Activated B cell treated with CpG ODN at 0.5 μM for 24 hours (primary cell): ENCODE measurements at regions of chr15 and their contacts with region 1.

Region 1: DNA sequence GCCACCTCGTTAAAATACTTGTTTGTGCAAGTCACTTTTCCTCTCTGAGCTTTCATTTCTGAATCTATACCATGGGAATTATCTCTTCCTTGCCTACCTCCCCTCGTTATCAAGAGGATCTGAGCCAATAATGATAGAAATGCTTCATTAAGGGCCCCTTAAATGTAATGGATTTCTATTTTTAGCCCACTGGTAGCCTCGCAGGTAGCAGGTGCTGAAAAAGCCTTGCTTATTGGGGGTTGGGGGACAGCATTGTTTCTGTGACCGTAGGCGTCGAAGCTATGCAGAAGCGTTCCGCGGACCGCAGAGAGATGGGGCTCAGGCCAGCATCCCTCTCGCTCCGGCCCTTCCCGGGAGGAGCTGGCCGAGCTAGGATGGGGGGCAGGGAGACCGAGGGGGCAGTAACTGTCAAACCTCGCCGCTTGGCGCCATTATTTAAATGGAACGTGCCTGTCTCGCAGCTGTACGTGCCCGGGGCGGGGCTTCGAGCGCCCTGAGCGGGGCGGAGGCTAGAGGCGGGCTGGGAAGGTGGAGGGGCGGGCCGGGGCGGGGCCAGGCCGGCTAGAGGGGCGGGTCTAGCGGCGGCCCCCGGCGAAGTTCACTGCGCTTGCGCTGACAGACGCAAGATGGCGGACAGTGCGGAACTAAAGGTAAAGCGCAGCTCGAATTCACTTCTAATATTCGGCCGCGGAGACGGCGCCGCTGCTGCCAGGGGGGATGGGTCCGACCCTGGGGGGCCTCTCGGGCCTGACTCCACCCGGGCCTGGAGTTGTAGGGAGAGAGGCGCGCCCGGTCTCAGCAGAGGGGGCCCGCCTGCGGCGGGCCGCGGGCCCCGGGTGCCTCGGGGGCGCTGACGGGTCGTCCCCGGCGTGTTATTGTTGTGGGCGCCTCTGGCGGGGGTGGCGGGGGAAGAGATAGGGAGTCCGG is at the start of gene PIAS1:
- DNase-seq: peak; percentile 91
- ATAC-seq: peak; percentile 90
- H3K4me3 Mint-ChIP-seq: peak within 1 kb of the TSS; percentile 94
- H3K27ac Mint-ChIP-seq: peak within 1 kb of the TSS; percentile 94
- H3K4me1 Mint-ChIP-seq: peaks cover 35% of the 10 kb centered on the region
- H3K27me3 Mint-ChIP-seq: no peaks in the 10 kb centered on the region
- CTCF ChIP-seq: no peak
- total RNA-seq, gene PIAS1: 47.0 and 56.3 TPM in 2 replicates

Region 2: GRCh38 chr15:67456677-67457529 is 597.1 kb before region 1 on chr15:
- CTCF ChIA-PET with region 1: no interaction called
- POLR2A ChIA-PET with region 1: no interaction called
- intact Hi-C with region 1: loop called (anchors 5 kb)
- DNase-seq: peak; percentile 70
- ATAC-seq: peak; percentile 97
- H3K4me3 Mint-ChIP-seq: no peak overlapping the region
- H3K27ac Mint-ChIP-seq: no peak overlapping the region
- H3K4me1 Mint-ChIP-seq: no peaks in the 10 kb centered on the region
- H3K27me3 Mint-ChIP-seq: peaks cover 4% of the 10 kb centered on the region
- CTCF ChIP-seq: peak; percentile 85

Region 3: GRCh38 chr15:67731112-67731761 is 322.7 kb before region 1 on chr15:
- CTCF ChIA-PET with region 1: no interaction called
- POLR2A ChIA-PET with region 1: no interaction called
- intact Hi-C with region 1: no loop called
- DNase-seq: no peak
- ATAC-seq: no peak
- H3K4me3 Mint-ChIP-seq: no peak overlapping the region
- H3K27ac Mint-ChIP-seq: no peak overlapping the region
- H3K4me1 Mint-ChIP-seq: peaks cover 12% of the 10 kb centered on the region
- H3K27me3 Mint-ChIP-seq: no peaks in the 10 kb centered on the region
- CTCF ChIP-seq: no peak

Region 4: DNA sequence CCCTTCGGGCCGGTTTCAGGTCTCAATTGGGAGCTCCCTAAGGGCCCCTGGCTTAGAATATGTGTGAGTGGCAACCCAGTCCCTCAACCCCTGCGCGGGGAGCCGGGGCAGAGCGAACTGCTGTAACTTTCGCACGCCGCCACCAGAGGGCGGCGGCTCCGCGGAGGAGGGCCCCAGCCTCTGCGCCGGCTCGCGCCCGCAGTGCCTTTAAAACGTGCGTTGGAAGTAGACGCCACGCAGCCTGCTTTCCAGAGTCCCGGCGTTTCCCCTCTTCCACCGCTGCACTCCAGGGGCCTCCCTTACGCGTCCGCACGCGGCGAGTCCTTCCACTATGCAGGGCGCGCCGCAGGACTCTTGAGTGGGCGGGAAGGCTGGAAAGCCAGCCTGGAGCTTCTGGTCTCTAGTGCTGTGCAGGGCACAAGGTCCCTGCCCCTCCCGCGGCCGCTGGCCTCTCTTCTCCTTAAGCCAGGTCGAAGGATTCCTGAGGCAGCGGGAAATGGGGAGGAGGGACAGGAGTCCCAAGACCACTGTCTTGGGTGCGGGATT is 190.4 kb before region 1 on chr15:
- CTCF ChIA-PET with region 1: no interaction called
- POLR2A ChIA-PET with region 1: interaction called, 16 read pairs
- intact Hi-C with region 1: loop called (anchors 1 kb)
- DNase-seq: peak; percentile 70
- ATAC-seq: peak; percentile 92
- H3K4me3 Mint-ChIP-seq: peak overlapping the region; percentile 77
- H3K27ac Mint-ChIP-seq: peak overlapping the region; percentile 88
- H3K4me1 Mint-ChIP-seq: peaks cover 17% of the 10 kb centered on the region
- H3K27me3 Mint-ChIP-seq: peaks cover 6% of the 10 kb centered on the region
- CTCF ChIP-seq: peak; percentile 70

Region 5: GRCh38 chr15:68114356-68114755 is 60.4 kb after region 1 on chr15:
- CTCF ChIA-PET with region 1: no interaction called
- POLR2A ChIA-PET with region 1: interaction called, 4 read pairs
- intact Hi-C with region 1: loop called (anchors 10 kb)
- DNase-seq: no peak
- ATAC-seq: no peak
- H3K4me3 Mint-ChIP-seq: peak overlapping the region; percentile 62
- H3K27ac Mint-ChIP-seq: no peak overlapping the region
- H3K4me1 Mint-ChIP-seq: peaks cover 70% of the 10 kb centered on the region
- H3K27me3 Mint-ChIP-seq: no peaks in the 10 kb centered on the region
- CTCF ChIP-seq: no peak

Region 6: DNA sequence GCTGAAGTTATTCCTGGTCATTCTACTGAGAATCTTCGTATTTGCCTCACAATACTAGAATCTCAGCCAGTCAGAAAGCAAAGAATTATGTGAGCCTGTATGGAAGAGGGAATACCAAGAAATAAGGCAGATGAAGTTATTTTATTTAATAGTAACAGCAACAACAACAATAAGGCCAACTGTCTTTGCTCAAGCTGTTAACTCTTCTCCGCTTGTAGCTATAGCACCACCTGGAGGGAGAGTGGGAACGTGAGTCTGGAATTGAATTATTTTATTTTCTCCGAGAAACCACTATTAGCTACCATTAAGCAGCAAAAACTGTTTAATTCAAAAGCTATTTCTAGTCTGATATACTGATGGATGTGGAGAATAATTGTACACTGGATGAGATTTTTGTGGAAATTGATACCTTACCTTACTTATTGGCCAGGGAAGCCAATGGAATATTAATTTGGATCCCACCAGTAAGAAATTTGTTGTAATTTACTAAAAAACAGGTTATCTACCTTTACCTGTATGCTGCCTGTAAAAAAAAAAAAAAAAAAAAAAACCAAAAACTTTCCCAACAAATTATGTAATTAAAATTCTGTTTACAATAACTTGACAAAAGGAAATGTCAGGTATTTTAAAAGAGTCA is 101.1 kb after region 1 on chr15:
- CTCF ChIA-PET with region 1: interaction called, 14 read pairs
- POLR2A ChIA-PET with region 1: interaction called, 5 read pairs
- intact Hi-C with region 1: loop called (anchors 1 kb)
- DNase-seq: no peak
- ATAC-seq: no peak
- H3K4me3 Mint-ChIP-seq: no peak overlapping the region
- H3K27ac Mint-ChIP-seq: no peak overlapping the region
- H3K4me1 Mint-ChIP-seq: no peaks in the 10 kb centered on the region
- H3K27me3 Mint-ChIP-seq: no peaks in the 10 kb centered on the region
- CTCF ChIP-seq: no peak

Region 7: GRCh38 chr15:68277603-68278344 is 223.8 kb after region 1 on chr15 and contains the start of gene FEM1B:
- CTCF ChIA-PET with region 1: no interaction called
- POLR2A ChIA-PET with region 1: interaction called, 35 read pairs
- intact Hi-C with region 1: loop called (anchors 1 kb)
- DNase-seq: peak; percentile 88
- ATAC-seq: peak; percentile 81
- H3K4me3 Mint-ChIP-seq: peak within 1 kb of the TSS; percentile 93
- H3K27ac Mint-ChIP-seq: peak within 1 kb of the TSS; percentile 96
- H3K4me1 Mint-ChIP-seq: peaks cover 55% of the 10 kb centered on the region
- H3K27me3 Mint-ChIP-seq: no peaks in the 10 kb centered on the region
- CTCF ChIP-seq: no peak
- total RNA-seq, gene FEM1B: 42.2 and 47.7 TPM in 2 replicates